ENCODE measurements at regions of chr9 and their contacts with region 1.

Region 1: GRCh38 chr9:7536310-7536939 is 263.2 kb downstream of the DMAC1 start:
- DNase-seq: peak in 3 of 10 donors; percentile 24 to 43 (median 38)
- H3K4me3 ChIP-seq: no peak overlapping the region
- H3K27ac ChIP-seq: no peak overlapping the region
- H3K27me3 ChIP-seq: peaks cover 0 to 3% (median 0%) of the 10 kb centered on the region in 45 donors
- CTCF ChIP-seq: peak in 55 of 56 donors; percentile 23 to 80 (median 61)

Region 2: GRCh38 chr9:7273391-7273974 is 262.9 kb before region 1 on chr9:
- intact Hi-C with region 1: loop called in 1 of 2 experiments (anchors 10 kb)
- DNase-seq: peak in 6 of 10 donors; percentile 30 to 52 (median 42)
- H3K4me3 ChIP-seq: no peak overlapping the region
- H3K27ac ChIP-seq: no peak overlapping the region
- H3K27me3 ChIP-seq: no peaks in the 10 kb centered on the region
- CTCF ChIP-seq: peak in 55 of 56 donors; percentile 12 to 84 (median 65)

Region 3: GRCh38 chr9:7405924-7406604 is 130.4 kb before region 1 on chr9:
- intact Hi-C with region 1: loop called (anchors 2 to 10 kb)
- DNase-seq: no peak
- H3K4me3 ChIP-seq: no peak overlapping the region
- H3K27ac ChIP-seq: no peak overlapping the region
- H3K27me3 ChIP-seq: no peaks in the 10 kb centered on the region
- CTCF ChIP-seq: no peak

Region 4: GRCh38 chr9:7520396-7520795 is 16.0 kb before region 1 on chr9:
- intact Hi-C with region 1: no loop called
- DNase-seq: no peak
- H3K4me3 ChIP-seq: no peak overlapping the region
- H3K27ac ChIP-seq: no peak overlapping the region
- H3K27me3 ChIP-seq: no peaks in the 10 kb centered on the region
- CTCF ChIP-seq: no peak

Measured in dorsolateral prefrontal cortex (tissue), 120 donors.